ENCODE measurements at regions of chr3 and their contacts with region 1.

Region 1: GRCh38 chr3:42749753-42750231 is 23.3 kb downstream of the CCDC13 start:
- DNase-seq: no peak
- H3K4me3 ChIP-seq: no peak overlapping the region
- H3K27ac ChIP-seq: peak overlapping the region in 3 of 4 donors; percentile 42 to 83 (median 80)
- H3K4me1 ChIP-seq: peaks cover 16 to 53% (median 23%) of the 10 kb centered on the region in 3 donors
- H3K27me3 ChIP-seq: no peaks in the 10 kb centered on the region
- CTCF ChIP-seq: peak in 5 of 6 experiments; percentile 17 to 56 (median 35)
- POLR2A ChIP-seq: no peak

Region 2: DNA sequence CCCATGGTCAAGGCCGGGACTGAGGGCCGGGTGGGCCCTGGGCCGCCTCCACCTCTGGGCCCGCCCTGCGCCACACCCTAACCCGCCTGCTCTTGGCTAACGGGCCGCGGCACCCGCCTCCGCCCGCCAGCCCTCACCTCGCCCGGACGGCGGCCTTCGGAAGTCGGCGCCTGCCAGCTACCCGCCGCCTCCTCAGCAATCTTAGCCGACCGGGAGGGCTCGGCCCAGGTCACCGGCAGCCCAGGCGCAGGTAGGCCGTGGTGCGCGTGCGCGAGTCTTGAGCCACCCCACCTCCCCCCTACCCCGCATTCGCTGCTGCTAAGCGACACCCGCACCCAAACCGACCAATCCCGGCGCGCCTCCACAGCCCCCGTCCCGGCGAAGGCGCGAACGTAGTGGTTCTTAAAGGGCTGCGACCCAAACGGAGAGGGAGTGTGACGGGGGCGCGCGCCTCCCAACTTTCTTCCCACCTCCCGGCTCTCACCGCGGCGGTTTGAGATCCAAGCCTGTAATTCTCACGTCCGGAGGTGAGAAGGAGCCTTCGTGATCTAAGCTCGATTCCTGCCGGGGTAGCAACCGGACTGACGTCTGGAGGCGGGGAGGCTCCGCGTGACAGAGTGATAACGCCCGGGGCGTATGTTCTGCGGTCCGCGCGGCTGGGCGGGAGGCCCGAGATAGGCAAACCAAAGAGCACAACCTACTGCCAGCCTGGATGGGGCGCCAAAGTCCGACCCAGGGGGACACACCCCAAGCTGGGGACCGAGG is 167.9 kb before region 1 on chr3 and contains the start of gene SEC22C:
- intact Hi-C with region 1: loop called (anchors 10 kb)
- DNase-seq: peak; percentile 83
- H3K4me3 ChIP-seq: peak within 1 kb of the TSS; percentile 61 to 84 (median 72)
- H3K27ac ChIP-seq: peak within 1 kb of the TSS; percentile 83 to 93 (median 88)
- H3K4me1 ChIP-seq: peaks cover 5 to 36% (median 9%) of the 10 kb centered on the region in 3 donors
- H3K27me3 ChIP-seq: no peaks in the 10 kb centered on the region
- CTCF ChIP-seq: peak in 3 of 6 experiments; percentile 8 to 17 (median 14)
- POLR2A ChIP-seq: peak in 3 of 4 donors; percentile 28 to 85 (median 66)
- total RNA-seq, gene SEC22C: 8.8 to 38.5 (median 26.2) TPM

Measured in esophagus squamous epithelium (tissue), 5 donors.